ENCODE measurements at regions of chr17 and their contacts with region 1.

Region 1: GRCh38 chr17:48593840-48594537 is 410 bp upstream of the HOXB5 start:
- DNase-seq: peak in 1 of 2 donors; percentile 53
- ATAC-seq: peak; percentile 32 to 65
- H3K4me3 ChIP-seq: peak overlapping the region; percentile 44 to 50 (median 49)
- H3K27ac ChIP-seq: peak overlapping the region in 2 of 4 donors; percentile 2 to 47
- H3K4me1 ChIP-seq: peaks cover 3 to 25% of the 10 kb centered on the region in 2 donors
- H3K27me3 ChIP-seq: peaks cover 67 to 89% (median 80%) of the 10 kb centered on the region in 3 donors
- CTCF ChIP-seq: peak; percentile 73 to 94 (median 82)
- POLR2A ChIP-seq: no peak

Region 2: DNA sequence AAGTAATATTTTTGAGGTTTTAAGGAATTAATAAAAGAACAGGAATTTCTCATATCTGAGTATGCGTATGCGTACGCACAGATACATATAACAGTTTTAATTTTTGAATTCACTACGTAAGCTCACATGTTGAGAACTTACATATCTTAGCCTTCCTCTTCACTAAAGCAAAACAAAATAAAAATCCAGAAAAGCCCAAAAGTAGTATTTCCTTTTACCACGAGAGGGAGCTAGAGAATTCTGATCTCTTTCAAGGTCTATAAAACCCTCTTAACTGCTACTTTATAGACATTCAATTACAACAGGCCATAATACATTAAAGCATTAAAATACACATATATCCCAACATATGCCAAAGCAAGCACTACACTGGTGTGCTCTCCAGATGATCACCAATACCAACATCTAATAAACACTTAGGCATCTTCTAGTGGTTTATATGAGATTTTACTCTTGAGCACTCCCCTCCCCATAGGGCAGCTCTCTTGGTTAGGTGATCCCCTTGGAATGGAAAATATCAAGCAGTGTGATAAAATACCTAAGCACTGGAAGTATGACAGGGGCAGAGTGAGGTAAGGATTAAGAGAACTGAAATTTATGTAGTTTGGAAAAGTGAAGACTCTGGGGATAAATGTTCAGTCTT is 258.0 kb before region 1 on chr17:
- in situ Hi-C with region 1: loop called in 3 of 4 experiments (anchors 10 kb)
- intact Hi-C with region 1: no loop called
- DNase-seq: no peak
- ATAC-seq: peak in 1 of 2 donors; percentile 36
- H3K4me3 ChIP-seq: no peak overlapping the region
- H3K27ac ChIP-seq: no peak overlapping the region
- H3K4me1 ChIP-seq: no peaks in the 10 kb centered on the region
- H3K27me3 ChIP-seq: peaks cover 7 to 26% (median 14%) of the 10 kb centered on the region in 3 donors
- CTCF ChIP-seq: peak in 4 of 5 experiments; percentile 43 to 75 (median 64)
- POLR2A ChIP-seq: no peak

Region 3: DNA sequence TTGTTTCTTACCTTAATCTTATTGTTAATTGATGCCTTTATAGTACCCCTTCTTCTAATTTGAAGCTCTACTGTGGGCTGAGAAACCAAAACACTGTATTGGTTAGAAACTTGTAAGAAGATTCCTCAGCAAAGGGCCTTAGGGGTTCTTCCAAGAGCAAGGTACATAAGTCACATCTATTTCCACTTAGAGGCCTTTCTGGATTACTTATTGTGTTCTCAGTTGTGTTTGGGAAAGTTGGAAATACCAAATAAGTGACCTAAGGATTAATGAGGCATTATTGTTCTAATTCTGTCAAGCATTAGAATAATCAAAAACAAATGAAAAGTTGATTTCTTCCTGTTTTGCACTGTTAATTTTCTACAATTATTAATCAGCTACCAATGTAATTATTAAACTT is 249.7 kb before region 1 on chr17:
- in situ Hi-C with region 1: loop called in 3 of 4 experiments (anchors 10 kb)
- intact Hi-C with region 1: no loop called
- DNase-seq: no peak
- ATAC-seq: no peak
- H3K4me3 ChIP-seq: no peak overlapping the region
- H3K27ac ChIP-seq: no peak overlapping the region
- H3K4me1 ChIP-seq: no peaks in the 10 kb centered on the region
- H3K27me3 ChIP-seq: peaks cover 0 to 8% (median 4%) of the 10 kb centered on the region in 3 donors
- CTCF ChIP-seq: no peak
- POLR2A ChIP-seq: no peak

Region 4: GRCh38 chr17:48351831-48352332 is 242.1 kb before region 1 on chr17:
- in situ Hi-C with region 1: loop called in 2 of 4 experiments (anchors 10 kb)
- intact Hi-C with region 1: loop called (anchors 5 kb)
- DNase-seq: no peak
- ATAC-seq: no peak
- H3K4me3 ChIP-seq: no peak overlapping the region
- H3K27ac ChIP-seq: no peak overlapping the region
- H3K4me1 ChIP-seq: no peaks in the 10 kb centered on the region
- H3K27me3 ChIP-seq: peaks cover 0 to 5% (median 0%) of the 10 kb centered on the region in 3 donors
- CTCF ChIP-seq: peak in 4 of 5 experiments; percentile 15 to 65 (median 37)
- POLR2A ChIP-seq: no peak

Region 5: DNA sequence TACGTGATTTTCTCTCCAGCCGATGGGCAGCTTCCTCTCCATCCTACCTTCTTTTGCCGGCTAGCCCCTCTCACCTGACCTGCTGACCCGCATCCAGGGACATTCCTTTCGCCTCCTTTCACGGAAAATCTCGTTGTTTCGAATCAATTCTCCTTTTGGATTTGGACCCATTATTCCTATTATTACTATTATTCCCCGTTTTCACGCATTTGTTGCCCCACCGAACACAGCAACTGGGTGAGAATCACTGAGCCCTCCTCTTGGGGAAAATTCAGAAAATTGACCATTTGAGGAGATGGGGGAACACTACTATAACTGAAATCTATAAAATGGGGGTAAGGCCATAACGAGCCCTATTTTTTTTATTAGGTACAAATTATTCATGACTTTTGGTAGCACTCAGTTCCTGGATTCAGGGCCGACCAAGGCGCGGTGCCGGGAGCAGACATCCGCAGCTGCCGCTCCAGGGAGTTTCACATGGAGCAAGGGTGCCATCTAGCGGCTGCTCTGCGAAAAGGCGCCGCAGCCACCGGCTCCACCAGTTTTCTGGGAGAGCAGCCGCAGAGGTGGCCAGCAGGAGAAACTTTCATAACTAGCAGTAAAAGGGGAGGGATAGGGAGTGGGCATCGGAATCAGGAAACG is 24.4 kb after region 1 on chr17:
- in situ Hi-C with region 1: no loop called
- intact Hi-C with region 1: no loop called
- DNase-seq: peak; percentile 64 to 76
- ATAC-seq: peak; percentile 89 to 90
- H3K4me3 ChIP-seq: peak overlapping the region in 1 of 4 donors; percentile 8
- H3K27ac ChIP-seq: no peak overlapping the region
- H3K4me1 ChIP-seq: no peaks in the 10 kb centered on the region
- H3K27me3 ChIP-seq: peaks cover 98 to 99% (median 99%) of the 10 kb centered on the region in 3 donors
- CTCF ChIP-seq: peak; percentile 93 to 98 (median 97)
- POLR2A ChIP-seq: no peak

Measured in gastrocnemius medialis (tissue), 4 donors.